AG04450 (cell line): ENCODE measurements at regions of chr9 and their contacts with region 1.

Region 1: GRCh38 chr9:96136992-96137670 is 164.8 kb downstream of the HSD17B3 start:
- DNase-seq: peak; percentile 47
- H3K4me3 ChIP-seq: peak overlapping the region; percentile 43
- H3K27ac ChIP-seq: peak overlapping the region; percentile 71
- H3K27me3 ChIP-seq: peaks cover 22% of the 10 kb centered on the region
- CTCF ChIP-seq: no peak

Region 2: DNA sequence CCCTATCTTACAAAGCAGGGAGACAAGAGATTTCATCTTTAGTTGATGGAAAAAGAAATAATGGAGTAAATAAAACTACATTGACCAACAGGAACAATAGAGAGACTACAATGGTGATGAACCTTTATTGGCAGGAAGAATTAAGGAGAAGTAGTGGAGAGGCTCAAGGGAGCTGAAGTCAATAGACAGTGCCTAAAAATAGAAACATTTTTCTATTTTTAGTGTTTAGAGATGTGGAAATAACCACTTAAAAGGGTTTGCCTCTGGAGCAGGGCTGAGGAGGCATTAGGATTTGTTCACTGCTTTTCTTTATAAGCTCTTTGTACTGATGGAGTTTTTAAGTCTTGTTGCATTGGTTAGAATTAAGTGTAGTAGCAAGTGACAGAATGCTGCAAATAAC is 360.0 kb before region 1 on chr9:
- CTCF ChIA-PET with region 1: no interaction called
- POLR2A ChIA-PET with region 1: interaction called, 13 read pairs
- DNase-seq: no peak
- H3K4me3 ChIP-seq: no peak overlapping the region
- H3K27ac ChIP-seq: no peak overlapping the region
- H3K27me3 ChIP-seq: no peaks in the 10 kb centered on the region
- CTCF ChIP-seq: no peak

Region 3: DNA sequence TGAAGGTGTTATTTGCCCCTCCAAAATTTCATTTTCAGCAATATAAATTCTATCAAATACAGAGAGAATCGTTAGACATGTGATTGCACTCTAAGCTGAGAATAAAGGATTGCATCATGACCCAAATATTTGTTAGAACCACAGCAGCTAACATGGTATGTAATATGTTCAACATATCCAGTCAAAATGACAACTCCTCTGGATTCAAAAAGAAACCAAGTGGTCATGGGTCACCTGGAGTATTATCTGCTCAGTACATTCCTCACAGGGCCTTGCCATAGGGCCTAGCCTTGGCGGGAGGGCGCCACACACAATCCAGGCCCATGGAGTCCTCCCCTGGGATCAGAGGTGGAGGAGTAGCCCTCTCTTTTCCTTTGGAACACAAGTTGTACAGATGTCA is 14.4 kb before region 1 on chr9:
- CTCF ChIA-PET with region 1: no interaction called
- POLR2A ChIA-PET with region 1: interaction called, 14 read pairs
- DNase-seq: peak; percentile 24
- H3K4me3 ChIP-seq: no peak overlapping the region
- H3K27ac ChIP-seq: no peak overlapping the region
- H3K27me3 ChIP-seq: peaks cover 32% of the 10 kb centered on the region
- CTCF ChIP-seq: no peak